H1 (cell line): ENCODE measurements at regions of chr3 and their contacts with region 1.

Region 1: GRCh38 chr3:183515968-183516851 is 39.3 kb downstream of the KLHL6 start:
- DNase-seq: no peak
- H3K4me3 ChIP-seq: no peak overlapping the region
- H3K27ac ChIP-seq: no peak overlapping the region
- H3K4me1 ChIP-seq: peaks cover 5 to 11% (median 8%) of the 10 kb centered on the region in 4 experiments; a peak in 4 of 7 replicates
- H3K27me3 ChIP-seq: no peaks in the 10 kb centered on the region
- CTCF ChIP-seq: peak in 2 of 3 experiments; percentile 38 to 56; a peak in 3 of 4 replicates
- EP300 ChIP-seq: no peak
- POLR2A ChIP-seq: no peak
- RAD21 ChIP-seq: peak; percentile 47 to 61

Region 2: GRCh38 chr3:183490670-183491069 is 25.5 kb before region 1 on chr3:
- CTCF ChIA-PET with region 1: interaction called, 11 read pairs
- POLR2A ChIA-PET with region 1: interaction called, 4 read pairs
- DNase-seq: peak; percentile 39 to 44
- H3K4me3 ChIP-seq: no peak overlapping the region
- H3K27ac ChIP-seq: no peak overlapping the region
- H3K4me1 ChIP-seq: peaks cover 0 to 12% (median 8%) of the 10 kb centered on the region in 4 experiments; a peak in 5 of 7 replicates
- H3K27me3 ChIP-seq: no peaks in the 10 kb centered on the region; a peak in 1 of 7 replicates
- CTCF ChIP-seq: no peak
- EP300 ChIP-seq: no peak
- POLR2A ChIP-seq: no peak
- RAD21 ChIP-seq: no peak

Region 3: DNA sequence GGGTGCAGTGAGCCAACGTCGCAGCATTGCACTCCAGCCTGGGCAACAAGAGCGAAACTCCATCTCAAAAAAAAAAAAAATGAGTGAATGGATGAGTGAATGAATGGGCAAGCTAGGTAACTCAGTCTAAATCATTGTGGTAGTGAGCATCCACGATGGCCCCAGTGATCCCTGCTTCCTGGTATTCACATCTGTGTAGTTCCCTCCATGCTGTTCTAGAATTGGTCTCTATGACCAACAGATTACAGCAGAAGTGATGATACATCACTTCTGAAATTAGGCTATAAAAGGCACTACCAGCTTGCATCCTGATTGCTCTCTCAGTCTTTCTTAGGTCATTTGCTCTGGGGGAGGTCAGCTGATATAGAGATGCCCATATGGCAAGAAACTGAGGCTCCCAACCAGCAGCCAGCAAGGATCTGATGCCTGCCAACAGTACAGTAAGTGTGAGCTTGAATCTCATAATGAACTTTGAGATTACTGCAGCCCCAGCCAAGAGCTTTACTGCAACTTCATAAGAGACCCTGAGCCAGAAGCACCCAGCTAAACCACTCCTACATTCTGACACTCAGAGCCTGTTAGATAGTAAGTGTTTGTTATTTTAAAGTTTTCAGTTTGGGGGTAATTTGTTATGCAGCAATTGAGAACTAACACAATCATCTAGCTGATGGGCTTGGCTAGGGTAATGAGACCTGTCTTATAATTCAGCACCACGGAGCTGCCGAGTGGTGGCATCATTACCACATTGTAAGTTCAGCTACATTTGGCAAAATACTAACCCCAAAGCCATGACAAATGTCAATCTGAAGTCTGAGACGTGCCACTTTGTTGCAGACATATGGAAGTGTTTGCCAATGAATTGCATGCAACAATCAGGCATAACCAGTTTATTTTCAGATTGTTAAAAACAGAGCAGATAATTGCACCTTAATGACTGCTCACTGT is 13.7 kb before region 1 on chr3:
- CTCF ChIA-PET with region 1: interaction called, 14 read pairs
- POLR2A ChIA-PET with region 1: no interaction called
- DNase-seq: no peak
- H3K4me3 ChIP-seq: no peak overlapping the region
- H3K27ac ChIP-seq: no peak overlapping the region
- H3K4me1 ChIP-seq: peaks cover 0 to 2% (median 0%) of the 10 kb centered on the region in 4 experiments; a peak in 1 of 7 replicates
- H3K27me3 ChIP-seq: no peaks in the 10 kb centered on the region
- CTCF ChIP-seq: no peak
- EP300 ChIP-seq: no peak
- POLR2A ChIP-seq: no peak
- RAD21 ChIP-seq: peak in 1 of 2 experiments; percentile 39; a peak in 3 of 4 replicates

Region 4: GRCh38 chr3:183527428-183528379 is 11.5 kb after region 1 on chr3:
- CTCF ChIA-PET with region 1: interaction called, 10 read pairs
- POLR2A ChIA-PET with region 1: interaction called, 4 read pairs
- DNase-seq: no peak
- H3K4me3 ChIP-seq: no peak overlapping the region
- H3K27ac ChIP-seq: no peak overlapping the region
- H3K4me1 ChIP-seq: peaks cover 0 to under 1% (median 0%) of the 10 kb centered on the region in 4 experiments; a peak in 1 of 7 replicates
- H3K27me3 ChIP-seq: peaks cover 0 to 2% (median 0%) of the 10 kb centered on the region in 4 experiments; a peak in 1 of 7 replicates
- CTCF ChIP-seq: no peak
- EP300 ChIP-seq: no peak
- POLR2A ChIP-seq: no peak
- RAD21 ChIP-seq: no peak

Region 5: DNA sequence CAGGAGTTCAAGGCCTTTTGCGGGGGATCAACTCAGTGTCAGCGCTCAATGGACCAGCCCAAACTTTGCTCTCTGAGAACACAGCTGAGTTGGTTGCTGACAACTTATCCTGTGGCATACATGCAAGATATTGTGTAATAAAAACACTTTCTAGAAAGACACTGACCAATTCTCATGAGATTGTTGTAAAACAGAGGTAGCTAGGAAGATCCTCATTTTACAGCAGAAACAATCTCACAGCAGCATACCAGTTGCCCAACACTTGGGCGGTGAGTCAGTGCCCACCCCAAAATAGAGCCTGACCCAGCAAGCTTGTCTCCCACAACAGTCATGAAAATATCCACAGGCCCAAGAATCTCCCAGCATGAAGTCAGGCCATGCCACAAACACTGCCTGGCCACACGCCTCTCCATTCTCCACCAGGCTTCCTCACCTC is 21.1 kb after region 1 on chr3:
- CTCF ChIA-PET with region 1: interaction called, 11 read pairs
- POLR2A ChIA-PET with region 1: no interaction called
- DNase-seq: no peak
- H3K4me3 ChIP-seq: no peak overlapping the region
- H3K27ac ChIP-seq: no peak overlapping the region
- H3K4me1 ChIP-seq: peaks cover 0 to 10% (median 2%) of the 10 kb centered on the region in 4 experiments; a peak in 4 of 7 replicates
- H3K27me3 ChIP-seq: peaks cover 0 to 2% (median 0%) of the 10 kb centered on the region in 4 experiments; a peak in 1 of 7 replicates
- CTCF ChIP-seq: no peak
- EP300 ChIP-seq: no peak
- POLR2A ChIP-seq: no peak
- RAD21 ChIP-seq: no peak